GM12878 (cell line): ENCODE measurements at regions of chr6 and their contacts with region 1.

Region 1: DNA sequence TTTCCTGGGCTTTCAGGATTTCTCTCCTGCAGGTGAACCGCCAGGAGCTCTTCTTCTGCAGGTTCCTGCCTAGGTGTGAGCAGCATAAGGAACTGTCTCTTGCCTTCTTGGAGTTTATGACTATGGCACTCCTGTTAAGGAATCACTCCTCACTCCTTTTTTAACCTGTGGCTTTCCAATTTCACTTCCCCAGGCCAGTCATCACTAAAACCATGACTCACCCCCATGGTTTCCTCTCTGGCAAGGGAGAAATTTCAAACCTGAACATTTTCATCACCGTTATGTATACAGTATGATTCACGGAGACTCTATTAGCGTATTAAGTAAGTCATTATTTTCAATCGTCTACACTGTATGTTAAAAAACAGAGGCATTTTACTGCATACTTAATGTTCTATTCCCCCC is 78.2 kb upstream of the ARID1B start:
- DNase-seq: peak; percentile 85
- ATAC-seq: peak; percentile 66
- H3K4me3 ChIP-seq: peak overlapping the region; percentile 65
- H3K27ac ChIP-seq: peak overlapping the region; percentile 97
- H3K4me1 ChIP-seq: peaks cover 57% of the 10 kb centered on the region
- H3K27me3 ChIP-seq: no peaks in the 10 kb centered on the region
- CTCF ChIP-seq: no peak
- EP300 ChIP-seq: peak; percentile 85 to 92
- POLR2A ChIP-seq: no peak; the same call in 1 of the 2 replicates
- RAD21 ChIP-seq: peak; percentile 39; the same call in 1 of the 2 replicates

Region 2: GRCh38 chr6:155351273-155352129 is 1347.5 kb before region 1 on chr6:
- CTCF ChIA-PET with region 1: no interaction called
- POLR2A ChIA-PET with region 1: no interaction called
- RAD21 ChIA-PET with region 1: no interaction called
- SMC1A ChIA-PET with region 1: no interaction called
- in situ Hi-C with region 1: no loop called
- intact Hi-C with region 1: loop called (anchors 5 kb)
- DNase-seq: peak; percentile 94
- ATAC-seq: peak; percentile 94
- H3K4me3 ChIP-seq: no peak overlapping the region
- H3K27ac ChIP-seq: peak overlapping the region; percentile 81
- H3K4me1 ChIP-seq: peaks cover 47% of the 10 kb centered on the region
- H3K27me3 ChIP-seq: no peaks in the 10 kb centered on the region
- CTCF ChIP-seq: no peak
- EP300 ChIP-seq: peak; percentile 94 to 98
- POLR2A ChIP-seq: no peak
- RAD21 ChIP-seq: peak; percentile 24; the same call in 1 of the 2 replicates

Region 3: GRCh38 chr6:156634951-156635371 is 64.1 kb before region 1 on chr6:
- CTCF ChIA-PET with region 1: interaction called, 3 read pairs
- POLR2A ChIA-PET with region 1: interaction called, 5 read pairs
- RAD21 ChIA-PET with region 1: interaction called, 22 read pairs
- SMC1A ChIA-PET with region 1: interaction called, 15 read pairs
- in situ Hi-C with region 1: no loop called
- intact Hi-C with region 1: no loop called
- DNase-seq: no peak
- ATAC-seq: no peak
- H3K4me3 ChIP-seq: no peak overlapping the region; the same call in 1 of the 2 replicates
- H3K27ac ChIP-seq: peak overlapping the region; percentile 83
- H3K4me1 ChIP-seq: peaks cover 32% of the 10 kb centered on the region
- H3K27me3 ChIP-seq: no peaks in the 10 kb centered on the region
- CTCF ChIP-seq: no peak
- EP300 ChIP-seq: no peak
- POLR2A ChIP-seq: no peak
- RAD21 ChIP-seq: no peak

Region 4: GRCh38 chr6:156767603-156768467 is 68.8 kb after region 1 on chr6:
- CTCF ChIA-PET with region 1: interaction called, 3 read pairs
- POLR2A ChIA-PET with region 1: interaction called, 3 read pairs
- RAD21 ChIA-PET with region 1: interaction called, 35 read pairs
- SMC1A ChIA-PET with region 1: interaction called, 11 read pairs
- in situ Hi-C with region 1: loop called (anchors 5 kb)
- intact Hi-C with region 1: no loop called
- DNase-seq: peak; percentile 90
- ATAC-seq: peak; percentile 96
- H3K4me3 ChIP-seq: peak overlapping the region; percentile 56; the same call in 1 of the 2 replicates
- H3K27ac ChIP-seq: peak overlapping the region; percentile 63
- H3K4me1 ChIP-seq: peaks cover 19% of the 10 kb centered on the region
- H3K27me3 ChIP-seq: no peaks in the 10 kb centered on the region
- CTCF ChIP-seq: no peak
- EP300 ChIP-seq: peak; percentile 20 to 54; a peak in 3 of 4 replicates
- POLR2A ChIP-seq: no peak
- RAD21 ChIP-seq: 0 out of 2 replicates have a peak, but pooled peaks have one; percentile 15

Region 5: DNA sequence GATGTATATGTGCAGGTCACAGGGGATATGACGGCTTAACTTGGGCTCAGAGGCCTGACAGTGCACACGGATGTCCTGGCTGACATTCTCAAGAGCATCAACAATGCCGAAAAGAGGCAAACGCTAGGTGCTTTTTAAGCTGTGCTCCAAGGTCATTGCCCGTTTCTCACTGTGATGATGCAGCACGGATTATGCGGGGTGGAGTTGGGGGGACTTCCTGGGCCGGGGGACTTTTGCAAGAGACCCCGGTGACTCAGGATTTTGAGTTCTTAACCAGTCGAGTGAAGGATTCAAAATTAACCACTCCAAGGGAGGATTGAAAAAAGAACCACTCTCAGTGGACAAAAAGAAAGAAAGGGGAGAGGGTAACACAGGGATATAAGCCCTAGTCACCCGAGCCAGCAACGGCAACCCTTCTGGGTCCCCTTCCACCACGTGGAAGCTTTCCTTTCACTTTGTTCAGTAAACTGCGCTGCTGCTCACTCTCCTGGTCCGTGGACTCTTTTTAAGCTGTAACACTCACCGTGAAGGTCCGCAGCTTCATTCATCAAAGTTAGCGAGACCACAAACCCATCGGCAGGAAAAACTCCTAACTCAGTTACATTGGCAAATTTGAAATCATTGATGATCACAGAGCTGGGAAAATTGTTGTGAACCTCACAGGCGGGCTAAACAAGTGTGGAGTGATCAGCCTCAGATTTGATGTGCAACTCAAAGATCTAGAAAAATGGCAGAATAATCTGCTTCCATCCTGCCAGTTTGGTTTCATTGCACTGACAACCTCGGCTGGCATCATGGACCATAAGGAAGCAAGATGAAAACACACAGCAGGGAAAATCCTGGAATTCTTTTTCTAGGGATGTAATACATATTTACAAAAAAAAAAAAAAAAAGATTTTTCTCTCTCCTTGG is 277.5 kb after region 1 on chr6:
- CTCF ChIA-PET with region 1: no interaction called
- POLR2A ChIA-PET with region 1: no interaction called
- RAD21 ChIA-PET with region 1: no interaction called
- SMC1A ChIA-PET with region 1: no interaction called
- in situ Hi-C with region 1: no loop called
- intact Hi-C with region 1: loop called (anchors 10 kb)
- DNase-seq: no peak
- ATAC-seq: peak; percentile 66
- H3K4me3 ChIP-seq: 0 out of 2 replicates have a peak overlapping the region, but pooled peaks have one; percentile 51
- H3K27ac ChIP-seq: peak overlapping the region; percentile 47; the same call in 1 of the 2 replicates
- H3K4me1 ChIP-seq: peaks cover 47% of the 10 kb centered on the region
- H3K27me3 ChIP-seq: no peaks in the 10 kb centered on the region
- CTCF ChIP-seq: no peak
- EP300 ChIP-seq: no peak
- POLR2A ChIP-seq: no peak
- RAD21 ChIP-seq: no peak